Activated B cell treated with CpG ODN at 0.5 μM for 24 hours (primary cell): ENCODE measurements at regions of chr11 and their contacts with region 1.

Region 1: GRCh38 chr11:113773416-113774173 is at the start of gene ZW10:
- DNase-seq: peak; percentile 89
- ATAC-seq: peak; percentile 96
- H3K4me3 Mint-ChIP-seq: peak within 1 kb of the TSS; percentile 98
- H3K27ac Mint-ChIP-seq: peak within 1 kb of the TSS; percentile 82
- H3K4me1 Mint-ChIP-seq: peaks cover 21% of the 10 kb centered on the region
- H3K27me3 Mint-ChIP-seq: peaks cover 7% of the 10 kb centered on the region
- CTCF ChIP-seq: peak; percentile 54
- total RNA-seq, gene ZW10: 13.8 and 15.5 TPM in 2 replicates

Region 2: GRCh38 chr11:112074026-112074811 is 1699.4 kb before region 1 on chr11 and contains the start of gene NKAPD1:
- CTCF ChIA-PET with region 1: no interaction called
- POLR2A ChIA-PET with region 1: no interaction called
- intact Hi-C with region 1: loop called (anchors 10 kb)
- DNase-seq: peak; percentile 69
- ATAC-seq: peak; percentile 82
- H3K4me3 Mint-ChIP-seq: peak within 1 kb of the TSS; percentile 96
- H3K27ac Mint-ChIP-seq: peak within 1 kb of the TSS; percentile 95
- H3K4me1 Mint-ChIP-seq: peaks cover 25% of the 10 kb centered on the region
- H3K27me3 Mint-ChIP-seq: no peaks in the 10 kb centered on the region
- CTCF ChIP-seq: no peak
- total RNA-seq, gene NKAPD1: 24.0 and 26.3 TPM in 2 replicates

Region 3: DNA sequence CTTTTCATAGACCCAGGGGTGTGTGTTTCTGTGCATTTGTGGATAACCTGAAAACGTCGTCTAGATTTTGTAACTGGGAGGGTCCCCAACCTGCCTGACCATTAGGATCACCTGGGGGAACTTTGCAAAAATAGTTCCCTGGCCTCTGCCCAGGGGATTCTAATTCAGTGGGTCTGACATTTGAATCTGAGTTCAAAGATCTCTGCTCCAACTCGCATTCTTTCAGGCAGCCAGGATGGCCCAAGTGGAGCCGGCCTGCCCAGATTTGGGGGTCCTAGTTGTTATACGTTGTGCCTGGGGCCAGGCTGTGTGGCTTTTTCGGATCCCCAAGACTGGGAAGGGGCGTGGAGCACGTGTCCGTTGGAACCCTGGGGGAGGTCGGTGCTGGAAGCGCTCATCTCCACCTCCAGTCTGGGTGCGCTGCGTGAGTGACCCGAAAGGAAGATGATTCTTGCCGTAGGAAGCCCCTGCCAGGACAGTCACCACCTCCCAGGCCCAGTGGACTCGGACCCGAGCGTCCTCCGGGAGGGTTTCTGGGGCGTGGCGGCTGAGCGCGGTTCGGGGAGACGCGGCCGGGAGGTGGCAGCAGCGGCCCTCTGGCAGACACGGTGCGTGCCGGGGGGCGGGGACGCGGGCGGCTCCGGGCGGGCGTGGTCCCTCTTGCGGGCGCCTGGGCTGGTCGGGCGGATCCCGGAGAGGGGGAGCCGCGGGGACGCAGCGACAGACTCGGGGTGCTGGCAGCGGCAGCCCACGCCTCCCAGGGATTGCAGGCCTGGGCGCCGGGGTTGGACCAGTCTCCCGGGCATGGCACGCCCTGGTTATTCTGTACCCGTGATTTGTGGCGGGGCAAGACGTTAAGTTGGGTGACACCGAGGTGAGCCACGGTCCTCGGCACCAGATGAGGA is 1483.8 kb before region 1 on chr11:
- CTCF ChIA-PET with region 1: no interaction called
- POLR2A ChIA-PET with region 1: no interaction called
- intact Hi-C with region 1: loop called (anchors 5 kb)
- DNase-seq: peak; percentile 83
- ATAC-seq: peak; percentile 98
- H3K4me3 Mint-ChIP-seq: peak overlapping the region; percentile 78
- H3K27ac Mint-ChIP-seq: peak overlapping the region; percentile 0
- H3K4me1 Mint-ChIP-seq: peaks cover 13% of the 10 kb centered on the region
- H3K27me3 Mint-ChIP-seq: no peaks in the 10 kb centered on the region
- CTCF ChIP-seq: peak; percentile 25

Region 4: GRCh38 chr11:113314389-113315301 is 458.9 kb before region 1 on chr11 and contains the start of gene TTC12:
- CTCF ChIA-PET with region 1: no interaction called
- POLR2A ChIA-PET with region 1: interaction called, 5 read pairs
- intact Hi-C with region 1: loop called (anchors 1 kb)
- DNase-seq: peak; percentile 98
- ATAC-seq: peak; percentile 99
- H3K4me3 Mint-ChIP-seq: peak within 1 kb of the TSS; percentile 85
- H3K27ac Mint-ChIP-seq: peak within 1 kb of the TSS; percentile 83
- H3K4me1 Mint-ChIP-seq: peaks cover 19% of the 10 kb centered on the region
- H3K27me3 Mint-ChIP-seq: no peaks in the 10 kb centered on the region
- CTCF ChIP-seq: no peak
- total RNA-seq, gene TTC12: 21.3 and 25.2 TPM in 2 replicates

Region 5: DNA sequence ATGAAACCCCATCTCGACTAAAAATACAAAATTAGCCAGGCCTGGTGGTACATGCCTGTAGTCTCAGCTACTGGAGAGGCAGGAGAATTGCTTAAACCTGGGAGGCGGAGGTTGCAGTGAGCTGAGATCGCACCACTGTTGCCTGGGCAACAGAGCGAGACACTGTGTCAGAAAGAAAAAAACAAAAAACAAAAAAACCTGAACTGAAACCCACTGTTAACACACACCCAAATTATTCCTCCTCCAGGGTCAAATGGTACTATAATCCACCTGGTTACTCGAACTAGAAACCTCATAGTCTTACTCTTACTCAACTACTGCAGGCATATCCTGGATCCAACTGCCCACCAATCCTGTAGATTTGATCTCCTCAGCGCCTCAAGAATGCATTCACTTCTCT is 66.2 kb after region 1 on chr11:
- CTCF ChIA-PET with region 1: no interaction called
- POLR2A ChIA-PET with region 1: no interaction called
- intact Hi-C with region 1: loop called (anchors 5 kb)
- DNase-seq: peak; percentile 30
- ATAC-seq: peak; percentile 91
- H3K4me3 Mint-ChIP-seq: peak overlapping the region; percentile 66
- H3K27ac Mint-ChIP-seq: no peak overlapping the region
- H3K4me1 Mint-ChIP-seq: peaks cover 37% of the 10 kb centered on the region
- H3K27me3 Mint-ChIP-seq: no peaks in the 10 kb centered on the region
- CTCF ChIP-seq: no peak

Region 6: DNA sequence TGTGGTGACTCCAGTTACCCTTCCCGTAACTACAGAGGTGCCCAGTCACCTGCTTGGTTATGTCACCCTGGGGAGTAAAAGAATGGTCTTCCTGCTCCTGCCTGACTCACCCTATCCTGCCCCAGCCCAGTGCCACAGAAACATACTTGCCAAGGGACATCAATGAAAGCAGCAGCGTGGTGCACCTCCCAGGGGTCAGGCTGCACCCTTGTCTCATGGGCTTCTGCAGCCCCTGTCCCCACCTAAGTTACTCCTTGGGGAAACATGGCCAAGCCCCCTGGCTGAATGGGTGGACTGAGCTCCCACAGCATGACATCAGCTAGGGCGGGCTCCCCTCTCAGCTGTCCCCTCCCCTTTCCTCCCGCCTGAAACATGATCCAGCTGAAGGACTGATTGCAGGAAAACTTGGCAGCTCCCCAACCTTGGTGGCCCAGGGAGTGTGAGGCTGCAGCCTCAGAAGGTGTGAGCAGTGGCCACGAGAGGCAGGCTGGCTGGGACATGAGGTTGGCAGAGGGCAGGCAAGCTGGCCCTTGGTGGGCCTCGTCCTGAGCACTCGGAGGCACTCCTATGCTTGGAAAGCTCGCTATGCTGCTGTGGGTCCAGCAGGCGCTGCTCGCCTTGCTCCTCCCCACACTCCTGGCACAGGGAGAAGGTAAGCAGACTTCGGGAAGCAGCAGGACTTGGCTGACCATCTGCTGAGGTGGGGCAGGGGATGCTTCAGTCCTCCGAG is 201.3 kb after region 1 on chr11 and contains the start of gene HTR3A:
- CTCF ChIA-PET with region 1: no interaction called
- POLR2A ChIA-PET with region 1: no interaction called
- intact Hi-C with region 1: loop called (anchors 2 kb)
- DNase-seq: no peak
- ATAC-seq: no peak
- H3K4me3 Mint-ChIP-seq: peak within 1 kb of the TSS; percentile 42
- H3K27ac Mint-ChIP-seq: peak within 1 kb of the TSS; percentile 50
- H3K4me1 Mint-ChIP-seq: peaks cover 64% of the 10 kb centered on the region
- H3K27me3 Mint-ChIP-seq: no peaks in the 10 kb centered on the region
- CTCF ChIP-seq: no peak
- total RNA-seq, gene HTR3A: 15.3 and 15.6 TPM in 2 replicates

Region 7: DNA sequence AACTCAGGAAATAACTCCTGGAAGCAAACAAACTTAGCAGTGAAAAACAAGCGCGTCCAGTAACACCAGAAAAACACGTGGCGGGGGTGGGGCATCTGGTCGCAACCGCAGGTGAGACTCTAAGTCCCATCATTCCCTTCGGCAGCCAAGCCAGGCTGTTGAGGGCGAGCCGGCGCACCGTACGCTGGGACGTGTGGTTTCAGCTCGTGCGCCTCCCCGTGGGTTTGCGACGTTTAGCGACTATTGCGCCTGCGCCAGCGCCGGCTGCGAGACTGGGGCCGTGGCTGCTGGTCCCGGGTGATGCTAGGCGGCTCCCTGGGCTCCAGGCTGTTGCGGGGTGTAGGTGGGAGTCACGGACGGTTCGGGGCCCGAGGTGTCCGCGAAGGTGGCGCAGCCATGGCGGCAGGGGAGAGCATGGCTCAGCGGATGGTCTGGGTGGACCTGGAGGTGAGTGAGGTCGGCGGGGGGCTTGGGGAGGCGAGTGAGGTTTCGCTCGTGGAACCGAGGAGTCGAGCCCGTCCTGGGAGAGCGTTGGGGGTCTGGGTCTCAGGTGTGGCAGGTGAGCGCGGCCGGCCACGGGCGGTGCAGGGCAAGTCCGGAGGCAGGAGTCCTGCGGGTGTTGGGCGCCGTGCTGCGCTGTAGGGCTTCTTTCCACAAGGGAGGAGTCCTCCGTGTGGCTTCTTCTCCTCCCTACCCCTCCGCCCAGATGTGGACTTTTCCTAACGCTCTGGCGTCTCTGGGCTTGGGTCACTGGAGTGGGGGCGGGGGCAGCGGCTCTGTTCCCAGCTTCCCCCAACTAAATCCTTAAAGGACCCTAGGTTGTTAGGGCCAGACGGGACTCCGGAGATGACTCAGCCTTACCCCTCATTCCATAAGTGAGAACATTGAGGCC is 665.9 kb after region 1 on chr11 and contains the start of gene REXO2:
- CTCF ChIA-PET with region 1: no interaction called
- POLR2A ChIA-PET with region 1: no interaction called
- intact Hi-C with region 1: loop called (anchors 2 kb)
- DNase-seq: peak; percentile 85
- ATAC-seq: peak; percentile 99
- H3K4me3 Mint-ChIP-seq: peak within 1 kb of the TSS; percentile 97
- H3K27ac Mint-ChIP-seq: peak within 1 kb of the TSS; percentile 87
- H3K4me1 Mint-ChIP-seq: peaks cover 17% of the 10 kb centered on the region
- H3K27me3 Mint-ChIP-seq: no peaks in the 10 kb centered on the region
- CTCF ChIP-seq: no peak
- total RNA-seq, gene REXO2: 26.1 and 27.3 TPM in 2 replicates